ENCODE measurements at regions of chr5 and their contacts with region 1.

Region 1: GRCh38 chr5:10856683-10857337 is 95.8 kb upstream of the DAP start:
- H3K4me3 ChIP-seq: peak overlapping the region; percentile 23
- H3K27ac ChIP-seq: no peak overlapping the region
- H3K4me1 ChIP-seq: no peaks in the 10 kb centered on the region; the same call in 1 of the 2 replicates
- CTCF ChIP-seq: peak; percentile 70

Region 2: GRCh38 chr5:10825897-10826644 is 30.7 kb before region 1 on chr5:
- CTCF ChIA-PET with region 1: interaction called, 23 read pairs
- POLR2A ChIA-PET with region 1: no interaction called
- H3K4me3 ChIP-seq: no peak overlapping the region
- H3K27ac ChIP-seq: no peak overlapping the region
- H3K4me1 ChIP-seq: no peaks in the 10 kb centered on the region
- CTCF ChIP-seq: no peak

Region 3: DNA sequence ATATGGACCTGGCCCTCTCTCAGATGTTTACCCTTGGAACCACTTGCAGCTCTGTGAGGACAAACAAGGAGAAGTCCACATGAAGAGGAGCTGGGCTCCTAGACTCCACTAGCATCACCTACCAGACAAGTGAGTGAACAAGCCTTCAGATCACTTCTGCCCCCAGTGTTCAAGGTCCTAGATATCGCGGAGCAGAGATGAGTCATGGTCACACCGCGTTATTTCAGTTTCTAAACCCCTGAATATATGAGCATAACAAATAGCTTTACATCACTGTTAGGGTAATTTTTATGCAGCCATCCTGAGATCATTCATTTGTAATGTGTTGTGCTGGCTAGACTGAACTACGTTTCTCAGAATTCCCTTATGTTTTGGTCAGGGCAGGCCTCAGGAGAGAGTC is 18.8 kb before region 1 on chr5:
- CTCF ChIA-PET with region 1: interaction called, 22 read pairs
- POLR2A ChIA-PET with region 1: no interaction called
- H3K4me3 ChIP-seq: no peak overlapping the region
- H3K27ac ChIP-seq: no peak overlapping the region
- H3K4me1 ChIP-seq: no peaks in the 10 kb centered on the region
- CTCF ChIP-seq: no peak

Region 4: GRCh38 chr5:10844016-10844415 is 12.8 kb before region 1 on chr5:
- CTCF ChIA-PET with region 1: interaction called, 25 read pairs
- POLR2A ChIA-PET with region 1: no interaction called
- H3K4me3 ChIP-seq: no peak overlapping the region
- H3K27ac ChIP-seq: no peak overlapping the region
- H3K4me1 ChIP-seq: no peaks in the 10 kb centered on the region
- CTCF ChIP-seq: no peak

Measured in HEK293 (cell line).